Breast epithelium (tissue), 4 donors: ENCODE measurements at regions of chr2 and their contacts with region 1.

Region 1: DNA sequence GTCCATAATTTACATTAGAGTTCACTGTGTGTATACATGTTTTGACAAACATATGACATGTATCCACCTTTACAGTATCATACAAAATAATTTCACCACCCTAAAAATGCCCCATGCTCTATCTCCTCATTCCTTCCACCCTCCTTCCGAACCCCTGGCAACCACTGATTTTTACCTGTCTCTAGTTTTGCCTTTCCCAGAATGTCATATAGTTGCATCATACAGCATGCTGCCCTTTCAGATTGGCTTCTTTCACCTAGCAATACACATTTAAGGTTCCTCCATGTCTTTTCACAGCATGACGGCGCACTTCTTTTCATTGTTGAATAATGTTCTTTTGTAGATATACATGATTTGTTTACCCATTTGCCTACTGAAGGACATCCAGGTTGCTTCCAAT is 10.4 kb downstream of the LRPPRC start:
- DNase-seq: no peak
- H3K4me3 ChIP-seq: no peak overlapping the region
- H3K27ac ChIP-seq: no peak overlapping the region
- H3K4me1 ChIP-seq: no peaks in the 10 kb centered on the region
- H3K27me3 ChIP-seq: no peaks in the 10 kb centered on the region
- CTCF ChIP-seq: no peak
- POLR2A ChIP-seq: no peak

Region 2: DNA sequence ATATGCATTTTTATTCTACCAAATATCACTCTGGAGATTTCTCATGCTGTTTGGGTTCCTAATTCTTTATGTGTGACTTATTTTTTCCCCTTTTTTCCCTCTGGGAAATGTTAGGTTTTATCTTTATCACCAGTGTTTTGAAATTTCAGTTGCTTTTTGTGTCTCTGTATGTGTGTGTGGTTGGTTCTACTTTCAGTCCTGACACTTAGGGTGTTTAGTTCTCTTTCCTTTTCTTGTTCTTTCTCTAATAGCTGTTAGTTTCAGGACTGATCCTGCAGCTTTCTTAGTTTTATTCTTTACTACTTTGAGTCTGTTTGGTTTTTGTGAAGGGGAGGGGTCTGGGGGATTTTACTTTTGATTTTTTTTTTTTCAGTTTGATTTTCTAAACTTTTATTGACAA is 206.4 kb after region 1 on chr2:
- intact Hi-C with region 1: no loop called
- DNase-seq: no peak
- H3K4me3 ChIP-seq: no peak overlapping the region
- H3K27ac ChIP-seq: no peak overlapping the region
- H3K4me1 ChIP-seq: peaks cover 0 to 5% of the 10 kb centered on the region in 2 donors
- H3K27me3 ChIP-seq: no peaks in the 10 kb centered on the region
- CTCF ChIP-seq: no peak
- POLR2A ChIP-seq: no peak

Region 3: DNA sequence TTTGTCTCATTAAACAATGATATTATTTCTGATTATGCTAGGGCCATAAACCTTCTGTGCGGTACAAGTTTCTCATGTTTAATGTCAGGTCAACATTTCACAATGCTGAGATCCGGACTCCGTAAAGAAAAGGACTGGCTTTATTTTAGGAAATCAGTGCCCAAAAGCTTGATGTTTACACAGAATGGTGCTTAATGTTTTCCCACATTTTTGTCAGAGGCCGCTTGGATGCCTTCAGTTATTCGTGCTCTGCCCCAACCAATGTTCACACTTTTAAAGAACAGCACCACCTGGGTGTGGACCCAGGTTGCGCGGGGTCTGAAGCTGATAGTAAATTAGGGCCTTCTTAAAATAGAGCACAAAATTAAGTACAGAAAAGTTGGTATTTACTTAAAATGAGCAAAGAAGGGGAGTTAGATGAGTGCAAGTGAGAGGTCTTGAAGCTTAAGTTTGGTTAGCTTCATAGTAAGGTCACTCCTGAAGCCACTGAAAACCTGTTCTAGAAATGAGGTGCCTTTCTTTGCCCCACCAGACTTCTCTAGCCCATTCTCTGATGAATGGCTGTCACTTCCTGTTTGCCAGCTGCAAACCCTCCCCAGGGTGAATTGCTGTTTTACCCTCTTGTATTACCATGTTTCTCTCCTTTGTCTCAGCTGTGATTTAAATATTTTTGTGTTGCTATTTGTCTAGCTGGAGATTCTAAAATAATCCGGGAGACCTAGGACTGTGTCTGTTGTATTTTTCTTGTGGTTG is 310.4 kb after region 1 on chr2:
- intact Hi-C with region 1: loop called (anchors 5 kb)
- DNase-seq: no peak
- H3K4me3 ChIP-seq: no peak overlapping the region
- H3K27ac ChIP-seq: no peak overlapping the region
- H3K4me1 ChIP-seq: peaks cover 0 to 4% of the 10 kb centered on the region in 2 donors
- H3K27me3 ChIP-seq: no peaks in the 10 kb centered on the region
- CTCF ChIP-seq: peak in 1 of 3 donors; percentile 10
- POLR2A ChIP-seq: no peak